Motor neuron (in vitro differentiated cells): ENCODE measurements at regions of chr20 and their contacts with region 1.

Region 1: GRCh38 chr20:21505161-21505809 is 8.6 kb downstream of the NKX2-2 start:
- ATAC-seq: peak; percentile 11 to 62 (median 48)
- H3K4me3 ChIP-seq: peak overlapping the region in 2 of 5 donors; percentile 31 to 34
- H3K27ac ChIP-seq: no peak overlapping the region
- H3K4me1 ChIP-seq: peaks cover 0 to 16% of the 10 kb centered on the region in 2 donors

Region 2: DNA sequence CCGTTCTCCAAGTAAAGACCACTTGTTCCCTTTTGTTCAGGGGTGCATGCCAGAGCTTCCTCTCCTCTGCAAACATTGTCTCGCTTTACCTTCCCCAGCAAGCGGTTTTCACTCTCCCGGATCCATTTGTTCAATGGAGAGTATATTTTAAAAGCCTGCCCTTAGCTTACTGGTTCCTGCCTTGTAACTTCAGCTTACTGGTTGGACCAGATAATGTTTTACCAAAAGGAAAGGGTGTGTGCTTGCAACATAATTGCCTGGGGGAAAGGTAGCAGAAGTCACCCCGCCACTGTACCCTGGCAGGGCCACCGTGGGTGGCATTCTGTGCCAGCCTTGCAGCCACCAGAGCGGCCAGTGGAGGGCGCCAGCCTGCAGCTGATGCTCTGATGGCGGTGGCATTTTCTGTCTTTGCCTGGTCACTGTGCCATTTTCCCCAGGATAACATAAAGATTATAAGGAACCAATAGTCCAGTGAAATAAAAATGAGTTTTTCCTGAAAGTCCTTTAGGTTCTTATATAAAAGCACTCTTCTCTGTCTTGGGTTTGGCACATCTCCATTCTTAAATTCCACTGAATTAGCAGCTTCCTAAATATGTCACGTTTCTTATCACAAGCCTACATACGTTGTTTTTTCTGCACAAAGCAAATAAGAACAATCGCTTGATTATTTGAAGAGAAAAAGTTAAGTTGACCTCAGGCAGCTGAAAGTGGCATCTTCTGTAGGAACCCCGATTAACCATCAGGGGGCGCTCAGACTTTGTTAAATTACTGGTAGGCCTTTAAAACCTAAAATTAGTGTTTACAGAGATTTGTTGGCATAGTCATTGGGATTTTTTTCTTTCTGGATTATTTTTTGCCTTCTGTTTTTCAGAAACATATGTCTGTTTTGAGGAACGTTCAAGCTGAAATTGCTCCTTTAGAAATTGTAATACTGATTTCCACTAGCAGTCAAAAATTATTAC is 269.5 kb before region 1 on chr20:
- in situ Hi-C with region 1: loop called in 6 of 9 experiments (anchors 5 to 25 kb)
- ATAC-seq: peak; percentile 51 to 81 (median 78)
- H3K4me3 ChIP-seq: peak overlapping the region in 3 of 5 donors; percentile 3 to 15 (median 7)
- H3K27ac ChIP-seq: no peak overlapping the region
- H3K4me1 ChIP-seq: peaks cover 17 to 23% of the 10 kb centered on the region in 2 donors